Activated CD4-positive, alpha-beta T cell treated with anti-CD3 and anti-CD28 coated beads, Interleukin-2, amount 10 ng/mL, durations not matched to agents 7 days and 5 days (primary cell): ENCODE measurements at regions of chr11 and their contacts with region 1.

Region 1: GRCh38 chr11:66438504-66439466 is at the start of gene MRPL11:
- DNase-seq: peak; percentile 93
- H3K4me3 Mint-ChIP-seq: peak within 1 kb of the TSS; percentile 84
- H3K27ac Mint-ChIP-seq: peak within 1 kb of the TSS; percentile 98
- H3K4me1 Mint-ChIP-seq: peaks cover 18% of the 10 kb centered on the region
- H3K27me3 Mint-ChIP-seq: no peaks in the 10 kb centered on the region
- total RNA-seq, gene MRPL11: 72.4 to 76.4 TPM

Region 2: GRCh38 chr11:66282468-66283386 is 156.1 kb before region 1 on chr11:
- CTCF ChIA-PET with region 1: no interaction called
- POLR2A ChIA-PET with region 1: no interaction called
- DNase-seq: peak; percentile 100
- H3K4me3 Mint-ChIP-seq: peak overlapping the region; percentile 56
- H3K27ac Mint-ChIP-seq: peak overlapping the region; percentile 66
- H3K4me1 Mint-ChIP-seq: peaks cover 39% of the 10 kb centered on the region
- H3K27me3 Mint-ChIP-seq: peaks cover 3% of the 10 kb centered on the region

Region 3: GRCh38 chr11:66408488-66409214 is 30.1 kb before region 1 on chr11:
- CTCF ChIA-PET with region 1: interaction called, 28 read pairs
- POLR2A ChIA-PET with region 1: no interaction called
- DNase-seq: peak; percentile 93
- H3K4me3 Mint-ChIP-seq: peak overlapping the region; percentile 63
- H3K27ac Mint-ChIP-seq: no peak overlapping the region
- H3K4me1 Mint-ChIP-seq: peaks cover 3% of the 10 kb centered on the region
- H3K27me3 Mint-ChIP-seq: peaks cover 17% of the 10 kb centered on the region

Region 4: DNA sequence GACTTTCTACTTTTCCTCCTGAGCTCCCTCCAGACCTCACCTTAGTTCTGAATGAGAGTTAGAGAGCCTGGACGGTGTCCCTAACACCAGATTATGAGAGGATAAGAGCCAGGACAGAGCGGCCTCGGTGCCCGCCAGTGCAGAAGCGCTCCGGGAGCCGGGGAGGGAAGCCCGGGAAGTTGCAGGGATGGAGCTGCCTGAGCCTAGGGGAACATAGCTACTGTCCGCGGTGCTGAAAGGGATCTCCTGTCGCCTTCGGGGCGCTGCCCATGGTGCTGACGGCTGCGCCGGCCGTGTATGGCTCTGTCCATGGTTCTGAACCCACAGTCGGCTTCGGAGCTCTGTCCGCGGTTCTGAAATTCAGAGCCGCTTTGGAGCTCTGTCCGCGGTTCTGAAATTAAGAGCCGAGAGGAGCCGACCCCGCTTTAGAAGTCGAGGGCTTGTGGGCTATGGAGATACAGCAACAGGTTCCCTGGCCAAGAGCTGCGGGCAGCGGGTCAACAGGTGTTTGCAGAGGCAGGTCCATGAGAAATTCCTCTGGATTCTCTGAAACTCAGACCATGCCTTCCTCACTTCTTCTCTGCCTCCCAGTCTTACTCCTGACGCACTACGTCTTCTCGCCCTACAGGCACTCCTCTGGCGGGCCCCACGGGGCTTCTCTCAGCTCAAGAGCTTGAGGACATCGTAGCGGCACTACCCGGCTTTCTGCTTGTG is 17.1 kb before region 1 on chr11:
- CTCF ChIA-PET with region 1: interaction called, 12 read pairs
- POLR2A ChIA-PET with region 1: no interaction called
- DNase-seq: peak; percentile 88
- H3K4me3 Mint-ChIP-seq: no peak overlapping the region
- H3K27ac Mint-ChIP-seq: no peak overlapping the region
- H3K4me1 Mint-ChIP-seq: peaks cover 18% of the 10 kb centered on the region
- H3K27me3 Mint-ChIP-seq: peaks cover 32% of the 10 kb centered on the region

Region 5: DNA sequence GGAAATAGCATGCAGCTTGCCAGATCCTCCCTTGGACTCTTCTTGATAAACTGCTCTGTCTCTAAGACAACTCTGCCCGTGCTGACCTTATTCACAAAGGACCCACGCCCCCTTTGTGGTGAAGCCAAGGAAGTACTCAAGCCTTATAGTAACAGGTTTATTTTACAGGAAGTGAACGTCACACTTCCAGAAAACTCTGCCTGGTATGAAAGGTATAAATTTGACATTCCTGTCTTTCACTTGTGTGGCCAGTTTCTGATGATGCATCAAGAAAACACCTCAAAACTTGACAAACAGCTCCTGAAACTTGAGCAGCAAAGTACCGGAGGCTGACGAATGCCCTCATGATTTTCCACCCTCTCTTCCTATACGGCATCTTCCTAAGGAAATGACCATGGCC is 15.5 kb after region 1 on chr11:
- CTCF ChIA-PET with region 1: interaction called, 18 read pairs
- POLR2A ChIA-PET with region 1: no interaction called
- DNase-seq: no peak
- H3K4me3 Mint-ChIP-seq: no peak overlapping the region
- H3K27ac Mint-ChIP-seq: no peak overlapping the region
- H3K4me1 Mint-ChIP-seq: peaks cover 17% of the 10 kb centered on the region
- H3K27me3 Mint-ChIP-seq: peaks cover 3% of the 10 kb centered on the region

Region 6: DNA sequence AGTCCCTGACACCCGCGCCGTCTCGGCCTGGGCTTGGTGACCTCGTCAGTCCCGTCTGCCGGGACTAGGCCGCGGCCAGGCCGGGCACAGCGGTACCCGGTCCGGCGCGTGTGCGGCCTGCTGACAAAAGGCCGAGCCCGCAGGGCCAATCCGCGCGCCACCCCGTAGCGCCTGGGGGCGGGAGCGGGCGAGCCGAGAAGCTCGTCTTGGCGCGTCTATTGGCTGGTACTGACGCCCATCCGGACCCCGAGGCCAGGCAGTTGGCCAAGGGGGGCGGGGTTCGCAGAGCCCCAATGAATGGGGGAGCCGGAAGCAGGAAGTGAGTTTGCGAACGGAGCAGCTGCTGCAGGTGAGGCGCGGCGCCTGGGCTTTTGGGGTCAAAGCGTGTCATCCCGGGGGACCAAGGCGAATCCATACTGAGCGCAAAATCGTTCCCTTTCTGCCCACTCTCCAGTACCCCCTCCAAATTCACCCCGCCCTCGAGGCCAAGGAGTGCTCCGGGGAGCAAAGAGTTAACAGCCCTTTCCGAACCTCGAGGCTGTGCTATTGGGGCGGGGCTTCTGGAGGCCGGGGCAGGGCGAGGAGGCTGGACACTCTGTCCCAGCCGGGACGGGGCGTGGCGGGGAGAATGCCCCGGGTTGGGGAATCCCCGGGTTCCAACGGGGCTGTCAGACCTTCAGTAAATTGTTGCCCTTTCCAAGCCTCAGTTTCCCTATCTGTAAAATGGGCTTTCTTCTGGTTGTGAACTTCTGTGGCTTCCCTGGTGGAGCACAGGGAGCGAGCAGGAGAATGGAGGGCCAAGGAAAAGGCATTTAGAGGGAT is 41.5 kb after region 1 on chr11 and contains the start of gene DPP3:
- CTCF ChIA-PET with region 1: interaction called, 12 read pairs
- POLR2A ChIA-PET with region 1: no interaction called
- DNase-seq: peak; percentile 97
- H3K4me3 Mint-ChIP-seq: peak within 1 kb of the TSS; percentile 87
- H3K27ac Mint-ChIP-seq: peak within 1 kb of the TSS; percentile 95
- H3K4me1 Mint-ChIP-seq: peaks cover 24% of the 10 kb centered on the region
- H3K27me3 Mint-ChIP-seq: no peaks in the 10 kb centered on the region
- total RNA-seq, gene DPP3: 78.4 to 82.3 TPM